AG04449 (cell line): ENCODE measurements at regions of chr22 and their contacts with region 1.

Region 1: GRCh38 chr22:36470162-36470993 is 11.1 kb downstream of the TXN2 start:
- DNase-seq: no peak
- H3K4me3 ChIP-seq: 0 out of 2 replicates have a peak overlapping the region, but pooled peaks have one; percentile 3
- CTCF ChIP-seq: peak; percentile 95

Region 2: DNA sequence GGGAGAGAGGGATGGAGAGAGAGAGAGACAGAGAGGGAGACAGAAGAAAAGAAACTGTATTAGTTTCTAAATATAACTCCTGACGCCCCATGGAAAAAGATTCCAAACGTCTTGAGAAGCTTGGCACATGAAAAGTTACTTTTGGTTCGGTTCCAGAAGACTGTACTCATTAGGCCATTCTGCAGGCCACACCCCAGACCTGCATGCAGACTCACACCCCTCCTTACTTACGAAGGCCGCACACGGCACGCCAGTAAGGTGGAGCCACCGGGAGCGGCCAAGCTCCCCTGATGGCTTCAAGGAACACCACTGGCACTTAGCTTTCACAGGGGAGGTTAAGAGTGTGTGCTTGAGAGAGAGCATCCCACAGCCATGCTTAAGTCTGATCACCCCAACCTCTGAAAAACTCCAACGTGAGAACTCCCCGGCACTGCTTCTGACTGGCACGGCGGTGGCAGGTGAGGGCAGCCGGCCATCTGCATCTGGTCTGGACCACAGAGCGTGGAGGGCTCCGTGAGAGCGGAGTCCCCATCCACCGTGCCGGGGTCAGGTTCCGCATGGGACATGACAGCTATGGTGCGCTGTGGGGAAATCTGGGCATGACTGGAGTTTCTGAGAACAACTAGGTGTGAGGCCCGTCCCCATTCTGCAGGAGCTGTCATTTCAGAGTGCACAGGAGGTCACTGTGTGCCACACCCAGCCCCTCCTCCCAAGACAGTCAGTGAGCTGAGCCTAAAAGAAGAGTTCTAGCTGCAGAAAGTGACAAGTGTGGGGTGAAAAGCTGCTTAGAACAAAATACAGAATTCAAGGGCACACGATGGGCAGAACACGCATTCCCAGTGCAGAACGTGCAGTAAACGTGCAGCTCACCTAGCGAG is 145.0 kb before region 1 on chr22:
- CTCF ChIA-PET with region 1: interaction called, 24 read pairs
- POLR2A ChIA-PET with region 1: interaction called, 8 read pairs
- DNase-seq: peak; percentile 72
- H3K4me3 ChIP-seq: no peak overlapping the region
- CTCF ChIP-seq: no peak

Region 3: DNA sequence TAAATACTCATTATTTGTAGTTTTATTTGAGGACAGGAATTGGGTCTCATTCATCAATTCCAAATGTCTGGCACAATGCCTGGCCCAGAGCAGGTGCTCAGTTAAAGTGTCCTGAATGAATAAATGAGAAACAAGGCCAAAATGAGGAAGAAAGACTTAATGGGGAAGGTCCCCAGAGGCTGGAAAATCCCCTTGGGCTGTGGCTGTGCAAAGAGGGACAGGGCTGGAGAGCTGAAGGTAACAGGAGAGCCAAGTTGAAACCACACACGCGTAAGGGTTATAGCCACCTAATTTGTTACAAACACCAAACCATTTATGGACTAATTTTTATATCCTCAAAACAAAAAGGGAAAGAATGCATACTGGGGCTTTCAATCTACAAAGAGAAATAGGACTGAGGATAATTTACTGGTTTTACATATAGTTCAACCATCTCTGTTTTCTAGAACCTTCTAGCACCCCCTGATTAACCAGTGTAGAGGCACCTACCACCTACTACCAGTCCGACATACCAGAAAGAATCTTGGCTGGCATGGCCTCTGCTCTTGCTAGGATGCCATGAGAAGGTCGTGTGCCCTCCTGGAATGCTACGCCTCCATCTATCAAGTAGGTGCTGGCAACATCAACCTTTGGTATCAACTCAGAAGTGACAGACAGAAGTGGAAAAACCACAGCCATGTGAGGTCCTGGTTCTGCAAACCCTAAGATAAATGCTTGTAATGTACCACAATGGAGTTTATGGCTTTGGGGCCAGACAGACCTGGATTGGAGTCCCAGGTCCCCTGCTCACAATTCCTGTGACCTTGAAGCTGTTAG is 111.0 kb before region 1 on chr22:
- CTCF ChIA-PET with region 1: interaction called, 20 read pairs
- POLR2A ChIA-PET with region 1: interaction called, 3 read pairs
- DNase-seq: no peak
- H3K4me3 ChIP-seq: peak overlapping the region; percentile 3; the same call in 1 of the 2 replicates
- CTCF ChIP-seq: no peak

Region 4: DNA sequence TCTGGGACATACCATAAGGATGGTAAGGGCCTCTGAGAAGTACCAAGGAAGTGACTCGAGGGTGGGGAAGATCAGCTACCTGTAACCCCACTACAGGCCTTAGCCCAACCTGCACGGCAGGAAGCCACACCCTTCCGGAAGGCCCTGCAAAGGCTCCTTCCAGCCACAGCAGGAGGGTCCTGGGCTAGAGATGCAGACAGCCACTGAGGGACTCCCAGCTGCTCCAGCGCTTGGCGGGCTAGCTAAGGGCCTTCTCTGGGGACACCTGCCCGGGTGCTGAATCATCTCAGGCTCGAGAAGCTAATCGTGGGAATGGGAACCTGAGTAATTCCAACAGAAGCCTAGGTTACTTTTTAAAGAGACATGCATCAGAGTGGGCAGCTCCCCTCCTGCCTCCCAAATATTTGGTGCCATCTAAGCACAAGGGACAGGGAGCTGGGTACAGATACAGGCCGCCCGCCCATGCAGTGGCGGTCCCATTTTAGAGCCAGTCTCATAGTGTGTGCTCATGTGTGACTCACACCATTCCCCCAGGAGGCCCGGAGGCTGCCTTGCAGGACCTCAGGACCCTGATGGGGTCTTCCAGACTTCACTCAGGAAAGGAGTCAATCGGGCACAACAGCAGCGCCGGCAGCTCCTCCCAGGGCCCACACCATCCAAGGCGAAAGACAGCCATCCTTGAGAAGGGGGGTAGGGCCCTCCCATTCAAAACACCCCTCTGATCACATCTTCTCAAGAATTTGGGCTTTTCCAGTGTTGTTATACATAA is 90.6 kb before region 1 on chr22:
- CTCF ChIA-PET with region 1: interaction called, 69 read pairs
- POLR2A ChIA-PET with region 1: interaction called, 172 read pairs
- DNase-seq: no peak
- H3K4me3 ChIP-seq: peak overlapping the region; percentile 8; the same call in 1 of the 2 replicates
- CTCF ChIP-seq: no peak

Region 5: GRCh38 chr22:36481393-36482168 is 11.2 kb after region 1 on chr22 and contains the start of gene TXN2:
- CTCF ChIA-PET with region 1: interaction called, 26 read pairs
- POLR2A ChIA-PET with region 1: interaction called, 7 read pairs
- DNase-seq: peak; percentile 71
- H3K4me3 ChIP-seq: peak within 1 kb of the TSS; percentile 82
- CTCF ChIP-seq: no peak